ENCODE measurements at regions of chr15 and their contacts with region 1.

Region 1: GRCh38 chr15:97482521-97482920 is 478.0 kb upstream of the ARRDC4 start:
- ATAC-seq: no peak
- H3K4me3 ChIP-seq: no peak overlapping the region
- H3K27ac ChIP-seq: no peak overlapping the region
- H3K4me1 ChIP-seq: no peaks in the 10 kb centered on the region

Region 2: GRCh38 chr15:96728591-96728990 is 753.9 kb before region 1 on chr15:
- in situ Hi-C with region 1: no loop called
- ATAC-seq: no peak
- H3K4me3 ChIP-seq: no peak overlapping the region
- H3K27ac ChIP-seq: no peak overlapping the region
- H3K4me1 ChIP-seq: peaks cover 0 to 10% of the 10 kb centered on the region in 2 donors

Region 3: DNA sequence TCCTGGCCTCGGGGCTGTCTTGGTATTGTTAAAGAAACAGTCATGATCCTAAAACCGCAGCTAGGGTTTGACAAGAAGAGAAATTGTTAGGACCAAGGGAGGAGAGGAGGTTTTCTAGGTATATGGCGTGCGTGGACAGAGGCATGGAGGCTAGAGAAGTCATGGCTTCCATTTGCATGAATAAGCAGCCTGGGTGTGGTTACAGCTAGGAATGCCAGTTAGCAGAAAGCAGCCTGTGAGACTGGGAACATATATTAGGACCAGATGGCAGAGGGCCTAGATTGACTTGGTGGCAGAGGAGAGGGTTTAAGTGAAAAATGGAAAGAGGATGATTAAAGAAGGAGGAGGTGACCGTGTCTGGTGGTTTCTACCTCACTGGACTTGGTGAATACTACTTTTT is 95.6 kb before region 1 on chr15:
- in situ Hi-C with region 1: loop called in 1 of 9 experiments (anchors 25 kb)
- ATAC-seq: peak in 2 of 8 experiments; percentile 65 to 73
- H3K4me3 ChIP-seq: no peak overlapping the region
- H3K27ac ChIP-seq: no peak overlapping the region
- H3K4me1 ChIP-seq: peaks cover 3 to 5% of the 10 kb centered on the region in 2 donors

Region 4: GRCh38 chr15:97615114-97615513 is 132.6 kb after region 1 on chr15:
- in situ Hi-C with region 1: no loop called
- ATAC-seq: no peak
- H3K4me3 ChIP-seq: no peak overlapping the region
- H3K27ac ChIP-seq: no peak overlapping the region
- H3K4me1 ChIP-seq: no peaks in the 10 kb centered on the region